ENCODE measurements at regions of chr13 and their contacts with region 1.

Region 1: GRCh38 chr13:56720841-56721240 is 419.9 kb upstream of the PRR20A start:
- DNase-seq: no peak
- ATAC-seq: no peak
- H3K4me3 ChIP-seq: no peak overlapping the region
- H3K27ac ChIP-seq: no peak overlapping the region
- H3K4me1 ChIP-seq: no peaks in the 10 kb centered on the region
- H3K27me3 ChIP-seq: no peaks in the 10 kb centered on the region
- CTCF ChIP-seq: no peak

Region 2: GRCh38 chr13:56615572-56615971 is 105.3 kb before region 1 on chr13:
- CTCF ChIA-PET with region 1: no interaction called
- POLR2A ChIA-PET with region 1: no interaction called
- in situ Hi-C with region 1: no loop called
- intact Hi-C with region 1: no loop called
- DNase-seq: no peak
- ATAC-seq: no peak
- H3K4me3 ChIP-seq: no peak overlapping the region
- H3K27ac ChIP-seq: no peak overlapping the region
- H3K4me1 ChIP-seq: no peaks in the 10 kb centered on the region
- H3K27me3 ChIP-seq: no peaks in the 10 kb centered on the region
- CTCF ChIP-seq: no peak

Region 3: DNA sequence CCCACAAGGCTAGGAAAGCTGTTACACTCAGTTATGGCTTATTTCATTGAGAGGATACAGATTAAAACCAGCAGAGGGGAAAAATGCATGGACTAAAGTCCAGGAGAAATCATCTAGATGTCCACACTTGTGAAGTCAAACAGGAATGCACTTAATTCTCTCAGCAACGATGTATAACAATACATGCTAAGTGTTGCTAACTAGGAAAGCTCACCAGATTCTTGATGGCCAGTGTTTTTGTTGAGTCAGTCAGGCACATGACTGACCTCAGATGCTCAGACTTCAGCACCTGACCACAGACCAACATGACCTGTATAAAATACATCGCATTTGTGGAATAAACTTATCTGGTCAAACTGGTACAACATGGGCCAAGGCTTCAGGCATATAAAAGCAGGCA is 50.3 kb before region 1 on chr13:
- CTCF ChIA-PET with region 1: no interaction called
- POLR2A ChIA-PET with region 1: no interaction called
- in situ Hi-C with region 1: no loop called
- intact Hi-C with region 1: no loop called
- DNase-seq: no peak
- ATAC-seq: no peak
- H3K4me3 ChIP-seq: no peak overlapping the region
- H3K27ac ChIP-seq: no peak overlapping the region
- H3K4me1 ChIP-seq: no peaks in the 10 kb centered on the region
- H3K27me3 ChIP-seq: no peaks in the 10 kb centered on the region
- CTCF ChIP-seq: no peak

Region 4: DNA sequence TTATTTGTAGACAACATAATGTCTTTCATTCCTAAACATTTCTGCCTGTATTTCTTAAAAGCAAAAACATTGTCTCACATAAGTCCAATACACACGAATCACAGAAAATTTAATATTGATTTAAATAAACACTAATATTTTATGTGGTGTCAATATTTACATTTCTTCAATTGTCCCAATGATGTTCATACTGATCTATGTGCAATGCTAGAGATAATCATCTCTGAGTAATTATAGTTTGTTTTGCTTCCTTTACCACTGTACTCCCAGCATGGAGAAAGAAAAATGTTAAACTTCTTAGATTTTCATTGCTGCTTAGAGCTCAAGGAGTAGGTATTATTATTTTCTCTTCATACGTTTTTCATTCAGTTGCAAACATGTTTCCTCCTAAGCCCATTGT is 14.4 kb before region 1 on chr13:
- CTCF ChIA-PET with region 1: interaction called, 13 read pairs
- POLR2A ChIA-PET with region 1: no interaction called
- in situ Hi-C with region 1: no loop called
- intact Hi-C with region 1: no loop called
- DNase-seq: no peak
- ATAC-seq: no peak
- H3K4me3 ChIP-seq: no peak overlapping the region
- H3K27ac ChIP-seq: no peak overlapping the region
- H3K4me1 ChIP-seq: no peaks in the 10 kb centered on the region
- H3K27me3 ChIP-seq: no peaks in the 10 kb centered on the region
- CTCF ChIP-seq: no peak

Region 5: DNA sequence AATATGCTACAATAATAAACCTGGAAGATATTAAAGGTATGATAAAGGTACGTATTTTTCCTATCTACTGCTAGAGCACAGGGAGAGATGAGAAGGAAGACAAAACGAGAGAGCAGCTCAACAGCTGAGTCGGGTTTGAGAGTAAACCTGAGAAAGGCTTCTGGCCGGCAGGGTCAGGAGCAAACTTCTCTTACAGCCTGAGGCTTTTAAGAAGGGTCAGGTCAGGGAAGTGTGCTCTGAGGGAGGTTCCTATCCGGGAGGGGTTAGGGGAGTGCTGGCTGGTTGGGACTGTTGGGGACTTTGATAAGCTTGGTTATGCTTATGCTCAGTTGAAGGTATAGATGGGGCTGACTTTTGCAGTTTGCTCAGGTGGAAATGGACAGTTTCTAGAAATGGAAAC is 342.2 kb after region 1 on chr13:
- CTCF ChIA-PET with region 1: no interaction called
- POLR2A ChIA-PET with region 1: no interaction called
- in situ Hi-C with region 1: no loop called
- intact Hi-C with region 1: no loop called
- DNase-seq: no peak
- ATAC-seq: no peak
- H3K4me3 ChIP-seq: no peak overlapping the region
- H3K27ac ChIP-seq: no peak overlapping the region
- H3K4me1 ChIP-seq: no peaks in the 10 kb centered on the region
- H3K27me3 ChIP-seq: no peaks in the 10 kb centered on the region
- CTCF ChIP-seq: no peak

Region 6: GRCh38 chr13:57253552-57253951 is 532.7 kb after region 1 on chr13:
- CTCF ChIA-PET with region 1: no interaction called
- POLR2A ChIA-PET with region 1: no interaction called
- in situ Hi-C with region 1: no loop called
- intact Hi-C with region 1: no loop called
- DNase-seq: no peak
- ATAC-seq: no peak
- H3K4me3 ChIP-seq: no peak overlapping the region
- H3K27ac ChIP-seq: no peak overlapping the region
- H3K4me1 ChIP-seq: no peaks in the 10 kb centered on the region
- H3K27me3 ChIP-seq: no peaks in the 10 kb centered on the region
- CTCF ChIP-seq: no peak

Measured in Panc1 (cell line).